Natural killer cell (primary cell): ENCODE measurements at regions of chr13 and their contacts with region 1.

Region 1: DNA sequence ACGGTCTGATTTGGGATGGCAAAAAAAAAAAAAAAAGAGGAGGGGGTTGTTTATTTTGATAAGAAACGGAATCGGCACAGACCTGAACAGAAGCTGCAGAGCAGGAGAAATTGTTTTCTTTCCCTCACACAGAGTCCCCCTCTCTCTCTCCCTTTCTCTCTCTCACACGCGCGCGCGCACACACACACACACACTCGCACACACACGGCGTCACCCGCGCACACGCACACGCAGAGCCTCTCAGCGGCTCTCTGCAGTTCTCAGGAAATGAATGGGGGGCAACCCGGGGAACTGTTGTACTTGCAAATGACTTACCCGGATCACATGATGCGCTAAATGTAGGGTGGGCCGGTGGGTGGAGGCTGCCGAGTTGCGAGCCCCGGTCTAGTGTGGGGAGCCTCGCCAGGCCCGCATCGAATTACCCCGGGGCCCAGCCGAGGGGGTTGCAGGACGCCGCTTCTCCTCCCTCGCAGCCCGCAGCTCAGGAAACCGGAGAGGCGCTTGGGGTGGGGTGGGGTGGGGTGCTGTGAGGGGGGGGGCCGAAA is 475 bp downstream of the KLF12 start:
- DNase-seq: peak; percentile 82 to 97
- ATAC-seq: peak; percentile 62 to 85 (median 73)
- H3K4me3 ChIP-seq: peak overlapping the region; percentile 73
- H3K4me3 Mint-ChIP-seq: peak overlapping the region; percentile 97
- H3K27ac ChIP-seq: peak overlapping the region; percentile 99
- H3K27ac Mint-ChIP-seq: peak overlapping the region in 1 of 2 donors; percentile 98
- H3K4me1 ChIP-seq: peaks cover 35% of the 10 kb centered on the region
- H3K4me1 Mint-ChIP-seq: peaks cover 44 to 46% of the 10 kb centered on the region in 2 donors
- H3K27me3 ChIP-seq: no peaks in the 10 kb centered on the region
- H3K27me3 Mint-ChIP-seq: no peaks in the 10 kb centered on the region
- CTCF ChIP-seq: no peak

Region 2: DNA sequence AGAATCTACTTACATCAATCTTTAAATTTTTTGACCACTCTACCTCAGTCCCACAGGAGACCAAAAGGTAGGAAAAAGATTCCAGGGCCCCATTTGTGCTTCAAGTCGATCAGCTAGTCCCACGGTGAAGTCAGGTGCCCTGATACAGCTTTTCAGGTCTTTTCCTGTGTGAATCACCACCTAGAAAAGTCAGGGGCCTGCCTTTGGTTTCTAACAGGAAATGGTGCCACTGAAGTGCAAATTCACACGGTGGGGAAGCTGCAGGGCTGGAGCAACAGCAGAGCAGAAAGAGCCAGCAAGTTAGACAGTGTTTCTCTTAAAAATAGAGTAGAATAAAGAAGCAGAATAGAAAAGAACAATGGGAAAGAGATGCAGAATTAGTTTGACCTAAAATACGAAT is 107.0 kb before region 1 on chr13:
- intact Hi-C with region 1: loop called (anchors 1 kb)
- DNase-seq: peak; percentile 61 to 85
- ATAC-seq: peak; percentile 93 to 97 (median 94)
- H3K4me3 ChIP-seq: peak overlapping the region; percentile 11
- H3K4me3 Mint-ChIP-seq: peak overlapping the region; percentile 89
- H3K27ac ChIP-seq: peak overlapping the region; percentile 67
- H3K27ac Mint-ChIP-seq: peak overlapping the region; percentile 90
- H3K4me1 ChIP-seq: peaks cover 7% of the 10 kb centered on the region
- H3K4me1 Mint-ChIP-seq: peaks cover 71 to 82% of the 10 kb centered on the region in 2 donors
- H3K27me3 ChIP-seq: no peaks in the 10 kb centered on the region
- H3K27me3 Mint-ChIP-seq: no peaks in the 10 kb centered on the region
- CTCF ChIP-seq: no peak

Region 3: GRCh38 chr13:74062933-74063332 is 70.8 kb before region 1 on chr13:
- intact Hi-C with region 1: loop called (anchors 2 kb)
- DNase-seq: peak in 1 of 2 donors; percentile 52
- ATAC-seq: no peak
- H3K4me3 ChIP-seq: no peak overlapping the region
- H3K4me3 Mint-ChIP-seq: peak overlapping the region; percentile 82
- H3K27ac ChIP-seq: peak overlapping the region; percentile 79
- H3K27ac Mint-ChIP-seq: peak overlapping the region; percentile 87 to 89
- H3K4me1 ChIP-seq: peaks cover 10% of the 10 kb centered on the region
- H3K4me1 Mint-ChIP-seq: peaks cover 72 to 83% of the 10 kb centered on the region in 2 donors
- H3K27me3 ChIP-seq: no peaks in the 10 kb centered on the region
- H3K27me3 Mint-ChIP-seq: no peaks in the 10 kb centered on the region
- CTCF ChIP-seq: no peak

Region 4: GRCh38 chr13:74243637-74244526 is 110.2 kb after region 1 on chr13:
- intact Hi-C with region 1: loop called (anchors 1 kb)
- DNase-seq: peak in 1 of 2 donors; percentile 70
- ATAC-seq: peak; percentile 76 to 89 (median 84)
- H3K4me3 ChIP-seq: no peak overlapping the region
- H3K4me3 Mint-ChIP-seq: peak overlapping the region; percentile 91
- H3K27ac ChIP-seq: peak overlapping the region; percentile 87
- H3K27ac Mint-ChIP-seq: peak overlapping the region; percentile 95 to 98
- H3K4me1 ChIP-seq: peaks cover 26% of the 10 kb centered on the region
- H3K4me1 Mint-ChIP-seq: peaks cover 68% of the 10 kb centered on the region in 2 donors
- H3K27me3 ChIP-seq: no peaks in the 10 kb centered on the region
- H3K27me3 Mint-ChIP-seq: no peaks in the 10 kb centered on the region
- CTCF ChIP-seq: no peak